Panc1 (cell line): ENCODE measurements at regions of chr12 and their contacts with region 1.

Region 1: DNA sequence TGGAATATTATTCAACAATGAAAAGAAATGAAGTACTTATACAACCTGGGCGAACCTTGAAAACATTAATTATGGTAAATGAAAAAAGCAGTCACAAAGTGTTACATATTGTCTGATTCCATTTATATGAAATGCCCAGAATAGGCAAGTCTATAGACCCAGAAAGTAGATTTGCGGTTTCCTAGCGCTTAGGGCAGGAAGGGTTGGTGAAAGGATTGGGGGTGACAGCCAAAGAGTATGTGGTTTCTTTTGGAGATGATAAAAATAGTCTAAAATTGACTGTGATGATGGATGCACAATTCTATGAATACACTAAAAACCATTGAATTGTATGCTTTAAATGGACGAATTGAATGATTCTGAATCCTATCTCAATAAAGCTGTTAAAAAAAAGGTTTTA is 55.8 kb downstream of the RESF1 start:
- DNase-seq: no peak
- ATAC-seq: no peak
- H3K4me3 ChIP-seq: no peak overlapping the region
- H3K27ac ChIP-seq: no peak overlapping the region
- H3K4me1 ChIP-seq: peaks cover 3% of the 10 kb centered on the region; the same call in 1 of the 2 replicates
- H3K27me3 ChIP-seq: no peaks in the 10 kb centered on the region
- CTCF ChIP-seq: no peak

Region 2: GRCh38 chr12:31931796-31932715 is 83.0 kb before region 1 on chr12:
- CTCF ChIA-PET with region 1: interaction called, 13 read pairs
- POLR2A ChIA-PET with region 1: no interaction called
- in situ Hi-C with region 1: no loop called
- intact Hi-C with region 1: no loop called
- DNase-seq: no peak
- ATAC-seq: no peak; the same call in 1 of the 2 replicates
- H3K4me3 ChIP-seq: no peak overlapping the region
- H3K27ac ChIP-seq: no peak overlapping the region
- H3K4me1 ChIP-seq: no peaks in the 10 kb centered on the region
- H3K27me3 ChIP-seq: no peaks in the 10 kb centered on the region
- CTCF ChIP-seq: no peak

Region 3: GRCh38 chr12:32146074-32146873 is 131.2 kb after region 1 on chr12:
- CTCF ChIA-PET with region 1: no interaction called
- POLR2A ChIA-PET with region 1: no interaction called
- in situ Hi-C with region 1: no loop called
- intact Hi-C with region 1: no loop called
- DNase-seq: no peak
- ATAC-seq: peak; percentile 38; the same call in 1 of the 2 replicates
- H3K4me3 ChIP-seq: no peak overlapping the region
- H3K27ac ChIP-seq: no peak overlapping the region
- H3K4me1 ChIP-seq: peaks cover under 1% of the 10 kb centered on the region; the same call in 1 of the 2 replicates
- H3K27me3 ChIP-seq: no peaks in the 10 kb centered on the region
- CTCF ChIP-seq: no peak